ENCODE measurements at regions of chr17 and their contacts with region 1.

Region 1: DNA sequence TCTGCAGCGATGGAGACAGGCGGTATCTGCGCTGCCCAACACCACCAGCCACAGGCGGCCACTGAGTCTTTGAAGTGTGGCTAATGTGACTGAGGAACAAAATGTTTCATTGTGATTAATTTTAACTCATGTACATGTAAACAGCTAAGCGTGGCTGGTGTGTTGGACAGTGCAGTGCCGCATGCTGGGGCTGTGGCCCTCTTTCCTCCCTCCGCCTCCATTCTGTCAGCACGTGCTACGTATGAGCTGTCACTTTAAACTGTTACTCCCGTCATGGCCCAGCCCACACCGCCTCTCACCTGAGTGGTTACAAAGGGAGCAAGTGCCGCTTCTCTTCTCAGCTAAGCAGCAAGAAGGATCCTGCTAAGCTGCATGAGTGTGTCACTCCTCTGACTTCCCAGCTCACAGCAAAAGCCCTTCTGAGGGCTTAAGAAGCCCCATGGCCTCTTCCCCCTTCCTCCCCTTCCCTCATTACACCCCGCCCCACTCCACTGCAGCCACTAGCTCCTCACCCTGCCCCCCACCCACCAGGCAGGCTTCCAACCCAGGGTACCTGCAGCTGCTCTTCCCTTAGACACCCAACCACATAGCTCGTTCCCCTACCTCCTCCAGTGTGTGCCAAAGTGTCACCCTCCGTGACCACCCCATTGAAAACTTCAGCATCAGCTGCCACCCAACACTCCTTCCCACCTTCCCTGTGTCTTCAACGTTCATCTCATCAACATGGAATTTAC is 15.0 kb downstream of the HASPIN start:
- DNase-seq: no peak
- H3K4me3 ChIP-seq: no peak overlapping the region
- H3K27ac ChIP-seq: no peak overlapping the region
- H3K4me1 ChIP-seq: peaks cover 0 to 11% (median 9%) of the 10 kb centered on the region in 4 experiments
- H3K27me3 ChIP-seq: no peaks in the 10 kb centered on the region

Region 2: DNA sequence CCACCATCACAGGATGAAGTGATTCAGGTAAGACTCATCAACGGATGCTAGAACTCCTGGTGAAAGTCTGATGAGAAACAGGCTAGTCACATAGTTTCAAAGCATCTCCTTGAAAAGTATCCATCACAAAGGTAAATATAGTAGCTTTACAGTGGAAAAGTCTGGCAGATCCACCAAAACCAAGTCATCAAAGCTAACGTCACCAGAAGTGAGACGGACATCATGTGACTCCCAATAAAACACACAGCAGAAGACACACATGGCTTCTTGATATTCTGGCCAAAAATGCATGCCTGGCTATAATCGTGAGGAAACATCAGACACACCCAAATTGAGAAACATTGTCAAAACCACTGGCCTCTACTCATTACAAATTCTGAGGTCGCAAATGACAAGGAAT is 163.2 kb before region 1 on chr17:
- CTCF ChIA-PET with region 1: no interaction called
- POLR2A ChIA-PET with region 1: no interaction called
- DNase-seq: no peak
- H3K4me3 ChIP-seq: no peak overlapping the region
- H3K27ac ChIP-seq: no peak overlapping the region
- H3K4me1 ChIP-seq: no peaks in the 10 kb centered on the region
- H3K27me3 ChIP-seq: no peaks in the 10 kb centered on the region

Region 3: GRCh38 chr17:3683054-3683511 is 55.6 kb before region 1 on chr17:
- CTCF ChIA-PET with region 1: interaction called, 16 read pairs
- POLR2A ChIA-PET with region 1: no interaction called
- DNase-seq: peak; percentile 41 to 66 (median 62)
- H3K4me3 ChIP-seq: no peak overlapping the region
- H3K27ac ChIP-seq: no peak overlapping the region
- H3K4me1 ChIP-seq: peaks cover 0 to 2% (median 1%) of the 10 kb centered on the region in 4 experiments
- H3K27me3 ChIP-seq: peaks cover 0 to 8% (median 0%) of the 10 kb centered on the region in 5 experiments

Region 4: GRCh38 chr17:3750926-3751325 is 12.2 kb after region 1 on chr17:
- CTCF ChIA-PET with region 1: interaction called, 25 read pairs
- POLR2A ChIA-PET with region 1: interaction called, 3 read pairs
- DNase-seq: no peak
- H3K4me3 ChIP-seq: no peak overlapping the region
- H3K27ac ChIP-seq: no peak overlapping the region
- H3K4me1 ChIP-seq: peaks cover 0 to 11% (median 4%) of the 10 kb centered on the region in 4 experiments
- H3K27me3 ChIP-seq: no peaks in the 10 kb centered on the region

Region 5: DNA sequence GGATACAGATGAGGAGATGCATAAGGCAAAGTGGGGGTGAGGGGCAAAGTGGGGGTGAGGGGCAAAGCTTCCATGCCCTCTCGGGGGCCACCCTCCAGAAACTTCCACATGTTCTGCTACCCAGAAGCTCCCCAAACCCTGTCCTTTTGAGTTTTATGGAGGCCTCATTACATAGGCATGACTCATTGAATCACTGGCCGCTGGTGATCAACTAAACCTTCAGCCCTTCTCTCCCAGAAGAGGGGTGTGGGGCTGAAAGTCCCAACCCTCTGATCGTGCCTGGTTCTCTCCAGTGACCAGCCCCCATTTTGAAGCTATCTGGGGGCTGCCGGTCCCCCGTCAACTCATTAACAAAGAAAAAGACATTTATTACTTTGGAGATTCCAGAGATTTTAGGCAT is 34.8 kb after region 1 on chr17:
- CTCF ChIA-PET with region 1: interaction called, 19 read pairs
- POLR2A ChIA-PET with region 1: no interaction called
- DNase-seq: no peak
- H3K4me3 ChIP-seq: no peak overlapping the region
- H3K27ac ChIP-seq: no peak overlapping the region
- H3K4me1 ChIP-seq: peaks cover 2 to 39% (median 30%) of the 10 kb centered on the region in 4 experiments
- H3K27me3 ChIP-seq: no peaks in the 10 kb centered on the region

Region 6: DNA sequence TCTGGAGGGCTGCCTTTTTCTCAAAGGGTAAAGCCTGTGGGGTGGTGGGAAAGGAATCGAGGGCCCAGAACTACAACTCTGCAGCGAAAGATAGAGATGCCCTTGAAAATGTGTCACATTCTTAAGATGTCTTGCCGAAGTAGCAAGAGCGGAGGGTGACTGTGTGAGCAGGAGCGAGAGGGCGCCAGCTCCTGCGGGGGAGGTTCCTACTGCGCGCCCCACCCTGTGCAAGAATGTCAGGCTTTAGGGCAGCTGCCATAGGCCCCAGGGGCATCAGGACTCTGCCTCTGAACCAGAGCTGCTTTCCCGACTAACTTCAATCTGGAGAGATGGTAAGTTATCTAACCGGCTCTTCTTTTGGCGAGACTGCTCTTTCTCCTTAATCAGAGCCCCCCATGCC is 74.0 kb after region 1 on chr17:
- CTCF ChIA-PET with region 1: interaction called, 20 read pairs
- POLR2A ChIA-PET with region 1: no interaction called
- DNase-seq: no peak
- H3K4me3 ChIP-seq: no peak overlapping the region
- H3K27ac ChIP-seq: no peak overlapping the region
- H3K4me1 ChIP-seq: no peaks in the 10 kb centered on the region
- H3K27me3 ChIP-seq: no peaks in the 10 kb centered on the region

Region 7: DNA sequence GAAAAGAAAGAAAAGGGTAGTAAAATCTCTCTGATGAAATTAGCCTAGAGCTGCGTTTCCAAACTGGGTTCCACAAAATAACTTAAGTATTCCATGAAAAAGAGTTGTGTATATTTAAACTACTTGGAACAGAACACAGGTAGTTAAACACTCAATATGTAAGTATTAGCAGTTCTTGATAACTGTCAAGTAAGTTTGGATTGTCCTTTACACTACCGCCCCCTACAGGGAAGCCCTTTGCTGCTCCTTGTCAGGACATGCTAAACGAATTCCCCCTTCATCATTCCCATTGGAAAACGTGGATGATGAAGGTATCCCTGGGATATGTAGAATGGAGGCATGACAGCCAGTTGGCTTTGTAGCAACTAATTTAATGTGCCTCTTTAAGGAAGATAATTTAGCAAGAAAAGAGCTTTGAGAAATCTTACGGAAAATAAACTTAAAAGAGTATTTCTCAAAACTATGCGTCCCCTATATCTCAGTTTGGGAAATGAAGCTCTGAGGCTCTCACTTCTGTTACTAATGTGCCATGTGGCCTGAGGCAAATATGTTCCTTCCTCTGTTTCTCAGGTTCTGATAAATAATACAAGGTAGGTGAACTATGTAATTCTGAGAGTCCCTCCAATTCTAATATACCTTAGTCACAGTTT is 88.5 kb after region 1 on chr17:
- CTCF ChIA-PET with region 1: interaction called, 267 read pairs
- POLR2A ChIA-PET with region 1: interaction called, 4 read pairs
- DNase-seq: peak; percentile 78 to 89 (median 85)
- H3K4me3 ChIP-seq: no peak overlapping the region
- H3K27ac ChIP-seq: no peak overlapping the region
- H3K4me1 ChIP-seq: peaks cover 0 to 5% (median 0%) of the 10 kb centered on the region in 4 experiments
- H3K27me3 ChIP-seq: no peaks in the 10 kb centered on the region

Region 8: DNA sequence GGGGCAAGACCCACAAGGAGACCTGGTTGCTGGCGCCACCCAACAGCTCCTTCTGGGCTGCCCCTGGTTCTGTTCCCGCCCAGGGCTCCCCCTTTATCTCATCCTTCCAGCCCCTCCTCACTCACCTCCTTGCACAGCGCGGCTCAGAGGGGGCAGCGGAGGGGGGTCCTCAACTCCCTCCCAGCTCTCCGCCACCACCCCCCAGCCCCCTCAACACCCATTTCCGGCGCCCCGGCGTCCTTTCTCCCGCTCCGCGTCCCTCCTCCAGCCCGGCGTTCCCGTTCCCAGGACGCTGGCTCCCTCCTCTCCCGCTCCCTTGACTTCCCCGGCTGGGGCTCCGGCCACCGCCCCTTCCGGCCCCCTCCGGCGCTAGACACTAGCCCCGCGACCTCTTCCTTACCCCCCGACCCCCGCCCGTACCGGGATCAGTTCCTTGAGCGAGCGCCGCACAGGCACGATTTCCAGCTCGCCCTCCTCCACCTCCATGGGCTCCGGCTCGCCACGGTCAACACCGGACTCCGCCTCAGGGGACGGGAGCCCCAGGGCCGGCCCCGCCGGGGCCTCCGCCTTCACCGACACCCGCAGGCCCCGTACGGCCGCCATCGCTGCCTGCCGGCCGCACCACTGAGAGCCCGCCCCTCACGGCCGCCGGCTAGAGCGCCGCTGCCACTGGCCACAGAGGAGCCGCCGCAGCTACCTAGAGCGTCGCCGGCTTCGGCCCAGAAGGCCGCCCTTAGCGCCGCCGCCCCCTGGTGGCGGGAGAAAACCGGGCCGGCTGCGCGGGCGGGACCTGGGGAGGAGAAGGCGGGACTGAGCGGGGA is 107.1 kb after region 1 on chr17 and contains the start of gene NCBP3:
- CTCF ChIA-PET with region 1: interaction called, 18 read pairs
- POLR2A ChIA-PET with region 1: no interaction called
- DNase-seq: peak; percentile 94 to 97 (median 97)
- H3K4me3 ChIP-seq: peak within 1 kb of the TSS; percentile 79 to 92 (median 88)
- H3K27ac ChIP-seq: peak within 1 kb of the TSS; percentile 82 to 91
- H3K4me1 ChIP-seq: peaks cover 3 to 22% (median 19%) of the 10 kb centered on the region in 4 experiments
- H3K27me3 ChIP-seq: no peaks in the 10 kb centered on the region

Region 9: GRCh38 chr17:3965118-3965803 is 226.5 kb after region 1 on chr17:
- CTCF ChIA-PET with region 1: no interaction called
- POLR2A ChIA-PET with region 1: no interaction called
- DNase-seq: peak; percentile 86 to 93 (median 90)
- H3K4me3 ChIP-seq: peak overlapping the region in 6 of 7 experiments; percentile 77 to 95 (median 86)
- H3K27ac ChIP-seq: peak overlapping the region in 1 of 2 experiments; percentile 75
- H3K4me1 ChIP-seq: peaks cover 8 to 72% (median 67%) of the 10 kb centered on the region in 4 experiments
- H3K27me3 ChIP-seq: no peaks in the 10 kb centered on the region

Measured in common myeloid progenitor, CD34-positive (primary cell).